CD4-positive, alpha-beta T cell (primary cell): ENCODE measurements at regions of chr17 and their contacts with region 1.

Region 1: GRCh38 chr17:76182016-76182764 is 41.1 kb upstream of the FOXJ1 start:
- DNase-seq: peak; percentile 89 to 97 (median 95)
- ATAC-seq: peak; percentile 73
- H3K4me3 ChIP-seq: no peak overlapping the region
- H3K4me3 Mint-ChIP-seq: peak overlapping the region; percentile 75
- H3K27ac ChIP-seq: no peak overlapping the region
- H3K27ac Mint-ChIP-seq: peak overlapping the region; percentile 92
- H3K4me1 ChIP-seq: peaks cover 72% of the 10 kb centered on the region
- H3K4me1 Mint-ChIP-seq: peaks cover 60% of the 10 kb centered on the region
- H3K27me3 ChIP-seq: no peaks in the 10 kb centered on the region
- H3K27me3 Mint-ChIP-seq: no peaks in the 10 kb centered on the region
- CTCF ChIP-seq: peak; percentile 86

Region 2: GRCh38 chr17:76121932-76122430 is 60.2 kb before region 1 on chr17:
- CTCF ChIA-PET with region 1: interaction called, 68 read pairs
- POLR2A ChIA-PET with region 1: interaction called, 43 read pairs
- intact Hi-C with region 1: loop called (anchors 1 kb)
- DNase-seq: peak in 3 of 14 experiments; percentile 21 to 49 (median 41)
- ATAC-seq: peak; percentile 12
- H3K4me3 ChIP-seq: peak overlapping the region; percentile 52
- H3K4me3 Mint-ChIP-seq: no peak overlapping the region
- H3K27ac ChIP-seq: no peak overlapping the region
- H3K27ac Mint-ChIP-seq: peak overlapping the region; percentile 42
- H3K4me1 ChIP-seq: peaks cover 31% of the 10 kb centered on the region
- H3K4me1 Mint-ChIP-seq: peaks cover 17% of the 10 kb centered on the region
- H3K27me3 ChIP-seq: no peaks in the 10 kb centered on the region
- H3K27me3 Mint-ChIP-seq: no peaks in the 10 kb centered on the region
- CTCF ChIP-seq: no peak

Region 3: DNA sequence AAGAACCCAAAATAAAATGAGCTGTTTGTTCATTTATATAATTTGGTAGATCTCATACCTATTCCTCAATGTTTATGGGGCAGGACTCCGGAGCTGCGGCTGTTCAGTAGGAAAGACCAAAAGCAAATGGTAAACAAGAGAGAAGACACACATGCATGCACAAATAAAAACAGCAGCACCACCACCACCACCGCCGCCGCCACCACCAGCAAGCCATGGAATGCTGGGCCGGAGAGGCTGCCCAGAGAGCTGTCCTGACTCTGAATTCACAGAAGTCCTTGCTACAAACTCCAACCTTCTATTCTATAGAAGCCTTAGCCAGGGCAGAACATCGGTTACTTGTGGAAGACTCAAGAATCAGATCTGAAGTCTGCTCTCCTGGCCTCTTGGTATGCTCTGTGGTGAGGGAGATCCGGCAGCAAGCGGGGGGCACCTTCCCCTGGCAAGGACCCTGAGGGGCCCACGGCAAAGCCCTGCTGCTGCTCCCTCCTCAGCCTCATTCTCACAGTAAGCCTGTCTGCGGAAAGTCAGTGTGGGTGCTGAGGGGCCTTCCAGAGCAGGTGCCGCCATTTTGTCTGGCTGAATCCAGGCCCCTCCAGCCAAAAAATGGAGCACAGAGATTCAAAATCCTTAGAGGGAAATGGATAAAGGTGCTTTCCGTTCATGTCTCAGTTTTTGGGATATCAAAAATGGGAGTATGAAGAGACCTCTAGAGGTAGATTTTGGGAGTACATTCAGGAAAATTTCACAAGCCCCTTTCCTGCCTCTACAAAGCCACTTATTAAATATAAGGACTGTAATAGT is 34.8 kb before region 1 on chr17:
- CTCF ChIA-PET with region 1: interaction called, 17 read pairs
- POLR2A ChIA-PET with region 1: interaction called, 58 read pairs
- intact Hi-C with region 1: no loop called
- DNase-seq: no peak
- ATAC-seq: no peak
- H3K4me3 ChIP-seq: no peak overlapping the region
- H3K4me3 Mint-ChIP-seq: no peak overlapping the region
- H3K27ac ChIP-seq: peak overlapping the region in 1 of 2 donors; percentile 84
- H3K27ac Mint-ChIP-seq: peak overlapping the region; percentile 97
- H3K4me1 ChIP-seq: peaks cover 70% of the 10 kb centered on the region
- H3K4me1 Mint-ChIP-seq: peaks cover 81% of the 10 kb centered on the region
- H3K27me3 ChIP-seq: no peaks in the 10 kb centered on the region
- H3K27me3 Mint-ChIP-seq: no peaks in the 10 kb centered on the region
- CTCF ChIP-seq: no peak

Region 4: GRCh38 chr17:76170114-76170513 is 12.1 kb before region 1 on chr17:
- CTCF ChIA-PET with region 1: interaction called, 17 read pairs
- POLR2A ChIA-PET with region 1: interaction called, 7 read pairs
- intact Hi-C with region 1: no loop called
- DNase-seq: no peak
- ATAC-seq: no peak
- H3K4me3 ChIP-seq: no peak overlapping the region
- H3K4me3 Mint-ChIP-seq: no peak overlapping the region
- H3K27ac ChIP-seq: no peak overlapping the region
- H3K27ac Mint-ChIP-seq: no peak overlapping the region
- H3K4me1 ChIP-seq: peaks cover 3% of the 10 kb centered on the region
- H3K4me1 Mint-ChIP-seq: peaks cover 25% of the 10 kb centered on the region
- H3K27me3 ChIP-seq: no peaks in the 10 kb centered on the region
- H3K27me3 Mint-ChIP-seq: no peaks in the 10 kb centered on the region
- CTCF ChIP-seq: no peak

Region 5: DNA sequence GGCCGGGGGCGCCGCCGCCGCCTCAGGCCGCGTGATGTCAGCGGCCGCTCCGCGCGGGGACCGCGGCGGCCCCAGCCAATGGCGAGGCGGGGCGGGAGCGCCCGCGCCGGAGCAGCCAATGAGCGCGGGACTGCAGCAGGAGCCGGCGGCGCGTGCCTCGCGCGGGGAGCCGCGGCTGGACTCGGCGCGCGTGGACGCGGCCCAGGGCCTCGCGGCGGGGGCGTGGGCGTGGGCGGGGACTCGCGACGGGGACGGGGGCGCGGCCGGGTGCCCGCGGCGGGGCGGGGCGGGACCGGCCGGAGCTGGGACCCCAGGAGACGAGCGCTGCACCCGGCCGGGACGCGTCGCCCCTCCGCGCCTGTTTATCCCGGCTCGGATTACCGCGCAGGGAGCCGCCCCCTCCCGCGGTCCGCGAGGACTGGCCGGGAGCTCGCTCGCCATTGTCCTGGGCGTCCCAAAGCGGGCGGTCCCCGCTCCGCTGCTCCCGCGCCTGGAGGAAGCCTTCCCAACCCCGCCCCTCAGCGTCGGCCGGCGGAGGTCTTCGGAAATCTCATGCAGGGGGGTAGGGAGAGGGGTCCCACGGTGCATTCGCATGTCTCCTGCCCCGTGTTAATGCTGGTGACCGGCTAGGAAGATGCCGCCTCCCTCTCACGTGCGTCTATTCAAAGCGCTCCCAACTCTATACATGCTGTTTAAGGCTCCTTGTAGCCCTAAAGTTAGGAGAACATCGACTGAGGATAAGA is 58.4 kb after region 1 on chr17 and contains the start of gene RNF157:
- CTCF ChIA-PET with region 1: interaction called, 14 read pairs
- POLR2A ChIA-PET with region 1: interaction called, 6 read pairs
- intact Hi-C with region 1: no loop called
- DNase-seq: peak; percentile 39 to 90 (median 64)
- ATAC-seq: peak; percentile 91
- H3K4me3 ChIP-seq: peak within 1 kb of the TSS; percentile 86
- H3K4me3 Mint-ChIP-seq: peak within 1 kb of the TSS; percentile 89
- H3K27ac ChIP-seq: peak within 1 kb of the TSS; percentile 35 to 36
- H3K27ac Mint-ChIP-seq: peak within 1 kb of the TSS; percentile 77
- H3K4me1 ChIP-seq: peaks cover 66% of the 10 kb centered on the region
- H3K4me1 Mint-ChIP-seq: peaks cover 54% of the 10 kb centered on the region
- H3K27me3 ChIP-seq: no peaks in the 10 kb centered on the region
- H3K27me3 Mint-ChIP-seq: no peaks in the 10 kb centered on the region
- CTCF ChIP-seq: no peak
- total RNA-seq, gene RNF157: 18.5 to 21.1 TPM

Region 6: GRCh38 chr17:76278952-76279741 is 97.0 kb after region 1 on chr17:
- CTCF ChIA-PET with region 1: interaction called, 38 read pairs
- POLR2A ChIA-PET with region 1: interaction called, 221 read pairs
- intact Hi-C with region 1: loop called in 1 of 2 experiments (anchors 1 kb)
- DNase-seq: peak; percentile 74 to 91 (median 84)
- ATAC-seq: peak; percentile 89
- H3K4me3 ChIP-seq: no peak overlapping the region
- H3K4me3 Mint-ChIP-seq: no peak overlapping the region
- H3K27ac ChIP-seq: no peak overlapping the region
- H3K27ac Mint-ChIP-seq: no peak overlapping the region
- H3K4me1 ChIP-seq: peaks cover 31% of the 10 kb centered on the region
- H3K4me1 Mint-ChIP-seq: peaks cover 13% of the 10 kb centered on the region
- H3K27me3 ChIP-seq: no peaks in the 10 kb centered on the region
- H3K27me3 Mint-ChIP-seq: no peaks in the 10 kb centered on the region
- CTCF ChIP-seq: peak; percentile 98